OCI-LY7 (cell line): ENCODE measurements at regions of chr19 and their contacts with region 1.

Region 1: GRCh38 chr19:49590071-49590970 is 661 bp upstream of the PRR12 start:
- DNase-seq: peak; percentile 99
- H3K4me3 ChIP-seq: peak overlapping the region; percentile 94
- H3K27ac ChIP-seq: peak overlapping the region; percentile 96
- H3K4me1 ChIP-seq: peaks cover 13% of the 10 kb centered on the region
- CTCF ChIP-seq: peak; percentile 16; the same call in 1 of the 2 replicates

Region 2: GRCh38 chr19:49640113-49640898 is 50.0 kb after region 1 on chr19 and contains the start of gene RRAS:
- CTCF ChIA-PET with region 1: no interaction called
- POLR2A ChIA-PET with region 1: interaction called, 17 read pairs
- intact Hi-C with region 1: loop called (anchors 2 kb)
- DNase-seq: peak; percentile 100
- H3K4me3 ChIP-seq: peak within 1 kb of the TSS; percentile 75
- H3K27ac ChIP-seq: peak within 1 kb of the TSS; percentile 88
- H3K4me1 ChIP-seq: peaks cover 21% of the 10 kb centered on the region
- CTCF ChIP-seq: no peak
- total RNA-seq, gene RRAS: 3.4 and 4.7 TPM in 2 replicates